ENCODE measurements at regions of chr15 and their contacts with region 1.

Region 1: DNA sequence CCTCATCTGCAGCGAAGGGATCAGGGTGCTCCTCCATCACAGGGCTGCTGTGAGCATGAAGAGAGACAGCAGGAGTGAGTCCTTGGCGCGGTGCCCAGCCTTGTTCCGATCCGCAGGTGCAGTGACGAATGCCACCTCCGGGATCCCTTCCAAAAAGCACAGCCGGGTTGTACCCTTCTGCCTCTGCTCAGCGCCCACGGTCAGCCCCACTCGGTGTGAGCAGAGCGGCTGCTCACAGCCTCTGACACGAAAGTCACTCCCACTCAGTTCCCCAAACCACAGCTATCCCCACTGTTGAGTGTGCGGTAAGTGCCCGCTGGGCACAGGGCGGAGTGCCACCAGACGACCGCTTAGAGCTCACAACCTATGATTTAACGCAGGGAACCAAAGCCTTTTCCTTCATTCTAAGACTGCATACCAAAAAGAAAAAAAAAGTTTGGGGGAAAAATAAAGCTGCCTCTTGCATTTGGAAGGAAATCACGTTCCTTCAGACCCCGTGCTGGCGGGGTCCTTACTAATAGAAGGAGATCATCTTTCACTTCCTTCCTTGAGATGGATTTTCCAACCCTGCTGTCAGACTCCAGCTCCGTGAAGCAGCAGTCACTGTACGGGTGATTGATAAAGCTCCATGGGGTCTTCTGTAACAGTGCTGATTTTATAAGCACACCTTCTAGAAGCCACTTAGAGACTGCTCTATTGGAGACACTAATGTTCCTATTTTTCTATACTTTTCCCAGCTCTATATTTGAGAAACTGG is 34.7 kb upstream of the TUBGCP5 start:
- DNase-seq: peak; percentile 15
- H3K4me3 ChIP-seq: no peak overlapping the region
- H3K27ac ChIP-seq: no peak overlapping the region
- H3K4me1 ChIP-seq: no peaks in the 10 kb centered on the region
- H3K27me3 ChIP-seq: no peaks in the 10 kb centered on the region
- CTCF ChIP-seq: no peak

Region 2: DNA sequence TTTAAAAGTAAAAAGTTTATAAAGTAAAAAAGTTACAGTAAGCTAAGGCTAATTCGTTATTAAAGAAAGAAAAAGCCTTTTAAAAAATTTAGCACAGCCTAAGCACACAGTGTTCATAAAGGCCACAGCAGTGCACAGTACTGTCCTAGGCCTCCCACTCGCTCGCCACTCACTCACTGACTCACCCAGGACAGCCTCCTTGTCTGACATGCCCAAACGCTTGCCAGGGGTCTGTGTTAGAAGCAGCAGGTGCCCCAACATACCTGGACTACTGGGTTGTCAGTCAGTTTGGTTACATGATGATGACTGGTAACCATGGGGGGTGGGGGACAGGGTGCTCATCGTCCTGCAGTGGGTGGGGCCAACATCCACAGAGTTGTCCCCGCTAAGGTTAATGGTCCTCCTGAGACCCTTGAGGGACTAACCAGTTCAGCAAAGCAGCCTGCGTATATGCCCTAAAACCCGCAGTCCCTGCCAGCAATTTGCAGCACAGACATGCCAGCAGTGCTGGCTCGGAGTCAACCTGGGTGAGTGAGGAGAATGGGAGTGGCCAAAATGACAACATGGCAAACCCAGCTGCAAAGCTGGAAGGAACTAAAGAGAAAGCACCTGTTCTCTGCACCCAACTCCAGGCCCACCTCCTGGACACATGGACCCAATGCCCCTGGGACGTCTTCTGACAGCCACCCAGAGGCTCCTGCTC is 143.1 kb before region 1 on chr15:
- CTCF ChIA-PET with region 1: no interaction called
- dilution Hi-C with region 1: no loop called
- in situ Hi-C with region 1: no loop called
- intact Hi-C with region 1: no loop called
- DNase-seq: peak; percentile 62
- H3K4me3 ChIP-seq: no peak overlapping the region
- H3K27ac ChIP-seq: no peak overlapping the region
- H3K4me1 ChIP-seq: peaks cover 12% of the 10 kb centered on the region
- H3K27me3 ChIP-seq: no peaks in the 10 kb centered on the region
- CTCF ChIP-seq: no peak

Region 3: GRCh38 chr15:22949074-22949547 is 125.0 kb before region 1 on chr15:
- CTCF ChIA-PET with region 1: no interaction called
- dilution Hi-C with region 1: no loop called
- in situ Hi-C with region 1: no loop called
- intact Hi-C with region 1: no loop called
- DNase-seq: peak; percentile 80
- H3K4me3 ChIP-seq: peak overlapping the region in 2 of 3 experiments; percentile 20 to 25
- H3K27ac ChIP-seq: no peak overlapping the region
- H3K4me1 ChIP-seq: peaks cover 53% of the 10 kb centered on the region
- H3K27me3 ChIP-seq: no peaks in the 10 kb centered on the region
- CTCF ChIP-seq: no peak

Region 4: DNA sequence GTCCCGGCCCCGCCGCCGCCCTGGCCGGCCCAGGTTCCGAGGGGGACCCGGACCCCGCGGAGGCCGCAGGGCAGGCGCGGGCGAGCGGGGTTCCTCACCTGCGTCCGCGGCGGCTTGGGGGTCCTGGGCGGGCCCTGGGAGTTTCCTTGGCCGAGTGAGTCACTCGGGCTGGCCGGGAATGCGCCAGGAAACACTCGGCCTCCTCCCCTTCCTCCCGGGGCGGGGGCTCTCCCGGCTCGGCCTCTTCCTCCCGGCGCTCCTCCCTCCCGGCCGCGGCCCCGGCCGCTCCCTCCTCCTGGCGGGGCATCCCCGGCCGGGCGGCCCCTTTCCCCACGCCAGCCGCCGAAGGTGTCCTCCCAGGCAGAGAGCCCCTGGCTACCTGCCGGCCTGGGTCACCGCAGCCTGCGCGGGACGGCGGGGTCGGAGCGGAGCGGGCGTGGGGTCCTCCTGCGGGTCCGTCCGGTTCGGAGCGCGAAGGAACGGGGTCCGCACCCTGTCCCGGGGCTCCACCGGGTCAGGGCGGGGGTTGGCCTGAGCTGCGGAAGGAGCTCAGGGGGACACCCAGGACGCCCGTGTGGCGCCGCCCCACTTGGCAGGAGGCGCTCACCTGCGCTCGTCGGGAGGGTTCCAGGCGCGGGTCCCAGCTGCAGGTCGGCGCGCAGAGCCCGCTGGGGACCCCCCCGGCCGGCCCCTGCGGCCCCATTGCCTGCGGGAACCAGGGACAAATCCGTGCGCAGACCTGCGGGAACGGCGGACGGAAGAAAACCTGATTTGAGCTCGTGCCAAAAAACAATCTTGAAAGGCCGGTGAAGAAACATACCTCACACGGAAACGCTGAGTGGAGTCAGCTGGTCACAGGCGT is 93.6 kb before region 1 on chr15 and contains the start of gene CYFIP1:
- CTCF ChIA-PET with region 1: no interaction called
- dilution Hi-C with region 1: no loop called
- in situ Hi-C with region 1: no loop called
- intact Hi-C with region 1: no loop called
- DNase-seq: peak; percentile 91
- H3K4me3 ChIP-seq: peak within 1 kb of the TSS; percentile 66 to 88 (median 72)
- H3K27ac ChIP-seq: peak within 1 kb of the TSS; percentile 71
- H3K4me1 ChIP-seq: peaks cover 11% of the 10 kb centered on the region
- H3K27me3 ChIP-seq: no peaks in the 10 kb centered on the region
- CTCF ChIP-seq: no peak
- total RNA-seq, gene CYFIP1: 128 to 158 TPM

Region 5: GRCh38 chr15:23014394-23015000 is 59.6 kb before region 1 on chr15:
- CTCF ChIA-PET with region 1: no interaction called
- dilution Hi-C with region 1: no loop called
- in situ Hi-C with region 1: loop called in 1 of 2 experiments (anchors 10 kb)
- intact Hi-C with region 1: no loop called
- DNase-seq: no peak
- H3K4me3 ChIP-seq: no peak overlapping the region
- H3K27ac ChIP-seq: no peak overlapping the region
- H3K4me1 ChIP-seq: no peaks in the 10 kb centered on the region
- H3K27me3 ChIP-seq: no peaks in the 10 kb centered on the region
- CTCF ChIP-seq: no peak

Region 6: DNA sequence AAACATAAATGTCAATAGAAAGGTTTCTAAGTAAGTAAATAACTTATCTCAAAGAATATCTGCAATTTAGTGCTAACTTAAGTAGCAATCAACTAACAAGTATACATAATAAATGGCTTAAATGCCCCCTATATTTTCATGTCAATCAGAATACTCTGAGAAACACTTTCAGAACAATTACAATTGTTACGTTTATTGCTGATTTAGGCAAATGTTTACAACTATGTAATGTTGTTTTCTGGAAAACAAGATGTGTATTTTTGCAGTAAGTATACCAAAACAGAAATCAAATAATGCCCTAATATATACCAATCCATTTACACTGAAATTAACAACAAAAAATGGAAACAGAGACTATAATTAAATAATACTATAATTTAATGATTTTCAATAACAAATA is 47.9 kb before region 1 on chr15:
- CTCF ChIA-PET with region 1: no interaction called
- dilution Hi-C with region 1: no loop called
- in situ Hi-C with region 1: loop called in 1 of 2 experiments (anchors 10 kb)
- intact Hi-C with region 1: no loop called
- DNase-seq: no peak
- H3K4me3 ChIP-seq: no peak overlapping the region
- H3K27ac ChIP-seq: no peak overlapping the region
- H3K4me1 ChIP-seq: no peaks in the 10 kb centered on the region
- H3K27me3 ChIP-seq: no peaks in the 10 kb centered on the region
- CTCF ChIP-seq: no peak

Measured in mammary epithelial cell (primary cell).